ENCODE measurements at regions of chr15 and their contacts with region 1.

Region 1: DNA sequence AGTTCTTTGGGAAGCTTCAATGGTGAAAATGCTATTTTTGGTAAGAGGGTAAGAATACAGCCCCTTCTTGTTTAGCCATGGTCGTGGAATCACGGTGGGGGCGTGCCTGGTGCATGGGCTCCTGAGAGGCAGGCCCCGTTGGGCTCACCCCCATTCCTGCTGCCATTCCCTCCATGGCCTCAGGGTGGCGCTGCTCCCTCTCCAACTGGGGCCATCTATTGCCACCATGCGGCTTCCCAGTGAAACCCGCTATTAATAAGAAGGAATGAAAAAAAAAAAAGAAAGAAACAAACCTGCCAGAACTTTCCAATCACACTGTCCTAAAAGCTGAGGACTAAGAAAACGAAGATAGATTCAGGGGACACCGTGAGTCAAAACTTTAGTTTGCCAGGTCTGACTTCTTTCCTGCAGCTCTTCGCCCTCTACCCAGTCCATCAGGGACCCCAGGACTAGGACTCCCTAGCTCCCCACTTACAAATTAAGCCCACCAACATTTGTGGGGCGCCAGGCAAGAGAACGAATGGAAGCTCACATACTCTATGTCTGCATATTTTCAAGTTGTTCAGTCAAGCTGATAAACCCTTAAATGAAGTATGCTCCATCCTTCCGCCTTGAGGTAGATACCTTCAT is 30.6 kb upstream of the ABHD2 start:
- DNase-seq: peak; percentile 89
- ATAC-seq: peak; percentile 97

Region 2: GRCh38 chr15:88299497-88299896 is 758.1 kb before region 1 on chr15:
- intact Hi-C with region 1: no loop called
- DNase-seq: no peak
- ATAC-seq: no peak

Region 3: GRCh38 chr15:89017370-89018066 is 40.1 kb before region 1 on chr15:
- intact Hi-C with region 1: no loop called
- DNase-seq: peak; percentile 84
- ATAC-seq: peak; percentile 73

Region 4: GRCh38 chr15:89101302-89102191 is 43.9 kb after region 1 on chr15:
- intact Hi-C with region 1: no loop called
- DNase-seq: peak; percentile 72
- ATAC-seq: peak; percentile 60

Region 5: GRCh38 chr15:89129123-89129815 is 71.7 kb after region 1 on chr15:
- intact Hi-C with region 1: loop called (anchors 10 kb)
- DNase-seq: peak; percentile 54
- ATAC-seq: no peak

Region 6: GRCh38 chr15:89177633-89178306 is 120.2 kb after region 1 on chr15:
- intact Hi-C with region 1: loop called (anchors 2 kb)
- DNase-seq: peak; percentile 64
- ATAC-seq: peak; percentile 55

Region 7: GRCh38 chr15:89278307-89278706 is 220.7 kb after region 1 on chr15:
- intact Hi-C with region 1: no loop called
- DNase-seq: no peak
- ATAC-seq: no peak